ENCODE measurements at regions of chr17 and their contacts with region 1.

Region 1: DNA sequence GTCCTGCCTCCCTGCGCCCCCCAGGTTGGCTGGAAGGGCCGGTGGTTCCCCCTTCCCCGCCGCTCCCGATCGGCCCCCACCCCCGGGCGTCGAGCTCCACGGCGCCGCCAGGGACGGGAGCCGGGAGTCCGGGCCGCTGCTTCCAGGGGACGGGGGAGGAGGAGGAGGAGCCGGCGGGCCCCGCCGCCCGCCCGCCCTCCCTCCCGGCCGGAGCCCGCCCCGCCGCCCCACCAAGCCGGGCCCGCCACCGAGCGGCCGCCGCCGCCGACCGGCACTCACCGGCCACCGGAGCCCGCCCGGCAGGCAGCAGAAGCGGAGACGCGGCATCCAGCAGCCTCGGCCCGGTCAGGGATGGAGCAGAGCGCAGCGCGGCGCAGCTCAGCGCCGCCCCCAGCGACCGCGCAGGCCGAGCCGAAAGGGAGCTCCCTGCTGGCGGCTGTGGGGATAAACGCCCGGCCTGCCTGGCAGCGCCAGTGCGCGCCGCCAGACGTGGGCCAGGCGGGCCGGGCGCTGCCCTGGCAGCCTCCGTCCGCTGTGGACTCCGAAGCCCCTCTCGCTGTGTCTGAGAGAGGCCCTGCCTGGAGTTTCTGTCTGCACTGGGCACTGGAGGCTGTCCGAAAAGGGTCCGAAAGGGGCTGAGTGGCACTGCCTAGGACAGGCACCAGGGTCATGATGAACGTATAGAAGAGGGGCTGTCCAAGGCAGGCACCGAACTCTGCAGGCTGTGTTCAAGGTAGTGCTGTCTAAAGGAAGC is at the start of gene MYO18A:
- DNase-seq: peak; percentile 83
- ATAC-seq: peak; percentile 95
- H3K4me3 Mint-ChIP-seq: peak within 1 kb of the TSS; percentile 58
- H3K27ac Mint-ChIP-seq: no peak within 1 kb of the TSS
- H3K4me1 Mint-ChIP-seq: peaks cover 31% of the 10 kb centered on the region
- H3K27me3 Mint-ChIP-seq: no peaks in the 10 kb centered on the region
- CTCF ChIP-seq: peak; percentile 86
- total RNA-seq, gene MYO18A: 27.5 to 29.4 TPM

Region 2: GRCh38 chr17:28576758-28577465 is 603.3 kb before region 1 on chr17 and contains the start of gene ALDOC:
- CTCF ChIA-PET with region 1: no interaction called
- POLR2A ChIA-PET with region 1: no interaction called
- intact Hi-C with region 1: no loop called
- DNase-seq: peak; percentile 99
- ATAC-seq: peak; percentile 98
- H3K4me3 Mint-ChIP-seq: peak within 1 kb of the TSS; percentile 81
- H3K27ac Mint-ChIP-seq: peak within 1 kb of the TSS; percentile 93
- H3K4me1 Mint-ChIP-seq: peaks cover 47% of the 10 kb centered on the region
- H3K27me3 Mint-ChIP-seq: no peaks in the 10 kb centered on the region
- CTCF ChIP-seq: no peak
- total RNA-seq, gene ALDOC: 142 to 146 TPM

Region 3: DNA sequence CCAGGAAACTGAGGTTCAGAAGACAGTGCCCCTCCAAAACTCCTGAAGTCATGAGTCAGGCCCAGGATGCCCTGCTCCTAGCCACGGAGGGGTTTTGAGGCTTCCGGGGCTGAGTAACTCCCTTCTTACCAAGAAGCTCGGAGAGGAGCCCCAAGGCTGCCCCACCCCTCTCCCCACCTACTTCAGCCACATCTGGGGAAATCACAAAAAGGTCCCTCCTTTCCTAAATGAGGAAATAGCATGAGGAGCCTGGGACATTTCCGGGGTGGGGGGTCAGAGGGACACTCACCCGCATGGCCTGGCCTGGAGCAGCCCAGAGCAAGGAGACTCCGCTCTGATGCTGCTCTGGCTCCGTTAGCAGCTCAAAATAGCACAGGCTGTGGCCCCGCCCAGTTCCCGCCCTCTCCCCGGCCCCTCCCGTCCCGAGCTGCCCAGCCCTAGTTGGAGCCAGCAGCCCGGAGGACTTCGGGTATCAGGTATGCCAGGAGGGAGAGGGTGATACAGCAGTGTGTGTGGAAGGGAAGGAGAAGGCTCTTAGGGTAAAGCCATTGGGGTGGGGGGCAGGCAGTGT is 40.1 kb before region 1 on chr17:
- CTCF ChIA-PET with region 1: interaction called, 355 read pairs
- POLR2A ChIA-PET with region 1: interaction called, 65 read pairs
- intact Hi-C with region 1: loop called (anchors 5 kb)
- DNase-seq: peak; percentile 96
- ATAC-seq: peak; percentile 74
- H3K4me3 Mint-ChIP-seq: peak overlapping the region; percentile 92
- H3K27ac Mint-ChIP-seq: peak overlapping the region; percentile 99
- H3K4me1 Mint-ChIP-seq: peaks cover 62% of the 10 kb centered on the region
- H3K27me3 Mint-ChIP-seq: no peaks in the 10 kb centered on the region
- CTCF ChIP-seq: no peak

Region 4: GRCh38 chr17:29155227-29155965 is 24.8 kb before region 1 on chr17:
- CTCF ChIA-PET with region 1: interaction called, 355 read pairs
- POLR2A ChIA-PET with region 1: interaction called, 65 read pairs
- intact Hi-C with region 1: no loop called
- DNase-seq: peak; percentile 88
- ATAC-seq: peak; percentile 98
- H3K4me3 Mint-ChIP-seq: peak overlapping the region; percentile 29
- H3K27ac Mint-ChIP-seq: peak overlapping the region; percentile 85
- H3K4me1 Mint-ChIP-seq: peaks cover 48% of the 10 kb centered on the region
- H3K27me3 Mint-ChIP-seq: no peaks in the 10 kb centered on the region
- CTCF ChIP-seq: no peak

Region 5: GRCh38 chr17:29168079-29168758 is 12.0 kb before region 1 on chr17:
- CTCF ChIA-PET with region 1: interaction called, 14 read pairs
- POLR2A ChIA-PET with region 1: no interaction called
- intact Hi-C with region 1: no loop called
- DNase-seq: no peak
- ATAC-seq: no peak
- H3K4me3 Mint-ChIP-seq: no peak overlapping the region
- H3K27ac Mint-ChIP-seq: no peak overlapping the region
- H3K4me1 Mint-ChIP-seq: no peaks in the 10 kb centered on the region
- H3K27me3 Mint-ChIP-seq: no peaks in the 10 kb centered on the region
- CTCF ChIP-seq: no peak

Region 6: GRCh38 chr17:29212681-29213121 is 32.5 kb after region 1 on chr17:
- CTCF ChIA-PET with region 1: interaction called, 10 read pairs
- POLR2A ChIA-PET with region 1: no interaction called
- intact Hi-C with region 1: no loop called
- DNase-seq: no peak
- ATAC-seq: no peak
- H3K4me3 Mint-ChIP-seq: no peak overlapping the region
- H3K27ac Mint-ChIP-seq: no peak overlapping the region
- H3K4me1 Mint-ChIP-seq: no peaks in the 10 kb centered on the region
- H3K27me3 Mint-ChIP-seq: no peaks in the 10 kb centered on the region
- CTCF ChIP-seq: no peak

Measured in activated CD8-positive, alpha-beta T cell treated with anti-CD3 and anti-CD28 coated beads for 36 hours (primary cell).